ENCODE measurements at regions of chr15 and their contacts with region 1.

Region 1: DNA sequence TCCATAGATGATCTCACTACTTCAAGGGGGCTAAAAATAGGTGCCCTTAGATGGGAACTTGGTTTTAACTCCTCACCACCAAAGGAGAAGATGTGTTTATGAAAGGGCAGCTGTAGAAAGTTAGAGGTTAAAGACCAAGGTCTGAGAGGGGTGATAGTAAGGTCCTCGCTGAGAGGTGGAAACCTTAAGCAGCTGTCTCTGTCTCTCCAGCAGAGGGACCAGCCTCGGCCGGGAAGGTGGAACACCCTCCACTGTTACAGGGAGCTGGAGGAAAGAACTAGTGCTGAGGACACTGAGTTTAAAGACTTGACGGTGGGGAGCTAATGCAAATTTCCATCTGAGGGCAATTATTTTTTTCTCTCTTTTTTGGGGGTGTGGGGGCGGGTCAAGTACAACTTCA is 8.9 kb upstream of the RLBP1 start:
- DNase-seq: no peak
- H3K4me3 ChIP-seq: no peak overlapping the region
- H3K27ac ChIP-seq: no peak overlapping the region
- H3K4me1 ChIP-seq: no peaks in the 10 kb centered on the region; a peak in 1 of 7 replicates
- H3K27me3 ChIP-seq: no peaks in the 10 kb centered on the region
- CTCF ChIP-seq: peak in 2 of 3 experiments; percentile 20 to 21; a peak in 2 of 4 replicates
- EP300 ChIP-seq: no peak
- POLR2A ChIP-seq: no peak
- RAD21 ChIP-seq: no peak

Region 2: GRCh38 chr15:89215627-89216026 is 14.7 kb before region 1 on chr15:
- CTCF ChIA-PET with region 1: interaction called, 11 read pairs
- POLR2A ChIA-PET with region 1: interaction called, 3 read pairs
- DNase-seq: no peak
- H3K4me3 ChIP-seq: no peak overlapping the region
- H3K27ac ChIP-seq: no peak overlapping the region
- H3K4me1 ChIP-seq: no peaks in the 10 kb centered on the region
- H3K27me3 ChIP-seq: no peaks in the 10 kb centered on the region
- CTCF ChIP-seq: no peak
- EP300 ChIP-seq: no peak
- POLR2A ChIP-seq: no peak
- RAD21 ChIP-seq: no peak

Region 3: GRCh38 chr15:89243691-89244471 is 13.6 kb after region 1 on chr15 and contains the start of gene FANCI:
- CTCF ChIA-PET with region 1: interaction called, 10 read pairs
- POLR2A ChIA-PET with region 1: interaction called, 5 read pairs
- DNase-seq: peak; percentile 89 to 97
- H3K4me3 ChIP-seq: peak within 1 kb of the TSS; percentile 79 to 96 (median 94)
- H3K27ac ChIP-seq: peak within 1 kb of the TSS; percentile 30
- H3K4me1 ChIP-seq: peaks cover 0 to 9% (median 3%) of the 10 kb centered on the region in 4 experiments; a peak in 5 of 7 replicates
- H3K27me3 ChIP-seq: peaks cover 0 to 2% (median 0%) of the 10 kb centered on the region in 4 experiments; a peak in 3 of 7 replicates
- CTCF ChIP-seq: peak; percentile 67 to 69 (median 67)
- EP300 ChIP-seq: peak; percentile 19 to 98
- POLR2A ChIP-seq: peak; percentile 26 to 63; a peak in 2 of 3 replicates
- RAD21 ChIP-seq: peak; percentile 62 to 65
- total RNA-seq, gene FANCI: 115 and 117 TPM in 2 replicates

Region 4: GRCh38 chr15:89399238-89400120 is 169.2 kb after region 1 on chr15:
- CTCF ChIA-PET with region 1: no interaction called
- POLR2A ChIA-PET with region 1: no interaction called
- DNase-seq: no peak
- H3K4me3 ChIP-seq: peak overlapping the region in 3 of 4 experiments; percentile 28 to 54 (median 33); a peak in 5 of 8 replicates
- H3K27ac ChIP-seq: no peak overlapping the region
- H3K4me1 ChIP-seq: peaks cover 5 to 45% (median 19%) of the 10 kb centered on the region in 4 experiments
- H3K27me3 ChIP-seq: peaks cover 93 to 99% (median 99%) of the 10 kb centered on the region in 4 experiments
- CTCF ChIP-seq: peak; percentile 52 to 74 (median 67)
- EP300 ChIP-seq: no peak
- POLR2A ChIP-seq: no peak
- RAD21 ChIP-seq: peak in 1 of 2 experiments; percentile 34; a peak in 2 of 4 replicates

Measured in H1 (cell line).